ENCODE measurements at regions of chr11 and their contacts with region 1.

Region 1: GRCh38 chr11:27506200-27507182 is at the start of gene LIN7C:
- DNase-seq: peak; percentile 86 to 96 (median 94)
- H3K4me3 ChIP-seq: peak within 1 kb of the TSS; percentile 72 to 100 (median 93)
- H3K27ac ChIP-seq: peak within 1 kb of the TSS in 58 of 59 donors; percentile 38 to 97 (median 90)
- H3K27me3 ChIP-seq: no peaks in the 10 kb centered on the region
- CTCF ChIP-seq: peak in 35 of 56 donors; percentile 11 to 58 (median 30)
- total RNA-seq, gene LIN7C: 30.2 to 58.4 (median 45.7) TPM

Region 2: DNA sequence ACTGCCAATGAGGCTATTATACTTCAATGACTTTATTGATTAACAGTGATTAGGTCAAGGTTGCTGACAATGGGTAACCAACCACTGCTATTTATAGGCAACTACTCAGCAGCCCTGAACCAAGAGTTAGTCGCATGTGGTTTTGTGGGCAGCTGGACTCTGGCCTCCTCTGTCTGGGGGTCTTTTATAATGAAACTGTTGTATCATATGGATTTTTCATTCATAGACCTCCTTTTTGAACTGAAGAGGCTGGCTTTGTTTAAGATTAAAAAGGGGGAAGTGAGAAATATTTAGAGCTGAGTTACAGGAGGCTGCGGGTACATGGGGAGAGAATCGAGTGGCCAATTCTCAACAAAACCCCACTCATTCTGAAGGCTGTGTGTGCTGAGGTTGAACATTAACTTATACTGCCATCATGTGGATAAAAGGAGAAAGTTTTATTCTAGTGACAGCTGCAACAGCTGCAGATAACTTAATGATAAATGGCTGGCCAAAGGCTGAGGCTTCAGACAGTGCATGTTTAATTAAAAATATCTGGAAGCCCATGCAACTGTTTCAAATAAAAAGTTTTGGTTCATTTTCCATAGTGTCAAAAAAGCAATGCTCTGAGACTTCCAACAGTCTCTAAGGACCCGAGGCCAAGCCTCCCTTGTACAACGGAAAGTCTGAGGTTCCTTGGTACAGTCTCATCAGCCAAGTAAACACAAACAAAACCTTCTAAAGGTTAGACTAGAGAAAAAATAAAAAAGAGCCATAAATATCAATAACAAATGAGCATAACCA is 1827.7 kb after region 1 on chr11:
- intact Hi-C with region 1: loop called in 1 of 2 experiments (anchors 10 kb)
- DNase-seq: no peak
- H3K4me3 ChIP-seq: no peak overlapping the region
- H3K27ac ChIP-seq: no peak overlapping the region
- H3K27me3 ChIP-seq: peaks cover 0 to 26% (median 5%) of the 10 kb centered on the region in 45 donors
- CTCF ChIP-seq: peak; percentile 18 to 72 (median 52)

Measured in dorsolateral prefrontal cortex (tissue), 120 donors.